Activated naive CD4-positive, alpha-beta T cell treated with anti-CD3 and anti-CD28 coated beads for 36 hours (primary cell): ENCODE measurements at regions of chr5 and their contacts with region 1.

Region 1: GRCh38 chr5:10695055-10695649 is 65.9 kb downstream of the DAP start:
- DNase-seq: peak; percentile 56
- H3K4me3 Mint-ChIP-seq: no peak overlapping the region
- H3K27ac Mint-ChIP-seq: no peak overlapping the region
- H3K4me1 Mint-ChIP-seq: peaks cover 39% of the 10 kb centered on the region
- H3K27me3 Mint-ChIP-seq: no peaks in the 10 kb centered on the region

Region 2: DNA sequence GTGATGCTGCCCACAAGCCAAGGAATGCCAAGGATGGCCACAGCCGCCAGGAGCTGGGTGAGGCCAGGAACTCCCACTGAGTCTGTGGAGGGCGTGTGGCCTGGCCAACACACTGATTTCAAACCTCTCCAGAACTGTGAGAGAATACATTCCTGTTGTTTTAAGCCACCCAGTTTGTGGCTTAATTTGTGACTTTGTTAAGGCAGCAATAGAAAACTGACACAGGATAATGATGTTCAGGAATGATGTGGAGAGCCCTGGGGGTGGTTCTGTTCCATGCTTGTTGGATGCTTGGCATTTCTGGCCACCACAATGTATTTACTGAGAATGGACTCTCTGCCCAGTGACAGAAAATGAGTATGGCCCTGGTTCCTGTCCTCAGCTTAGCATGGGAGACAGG is 16.9 kb before region 1 on chr5:
- CTCF ChIA-PET with region 1: no interaction called
- intact Hi-C with region 1: no loop called
- DNase-seq: no peak
- H3K4me3 Mint-ChIP-seq: no peak overlapping the region
- H3K27ac Mint-ChIP-seq: no peak overlapping the region
- H3K4me1 Mint-ChIP-seq: no peaks in the 10 kb centered on the region
- H3K27me3 Mint-ChIP-seq: no peaks in the 10 kb centered on the region

Region 3: DNA sequence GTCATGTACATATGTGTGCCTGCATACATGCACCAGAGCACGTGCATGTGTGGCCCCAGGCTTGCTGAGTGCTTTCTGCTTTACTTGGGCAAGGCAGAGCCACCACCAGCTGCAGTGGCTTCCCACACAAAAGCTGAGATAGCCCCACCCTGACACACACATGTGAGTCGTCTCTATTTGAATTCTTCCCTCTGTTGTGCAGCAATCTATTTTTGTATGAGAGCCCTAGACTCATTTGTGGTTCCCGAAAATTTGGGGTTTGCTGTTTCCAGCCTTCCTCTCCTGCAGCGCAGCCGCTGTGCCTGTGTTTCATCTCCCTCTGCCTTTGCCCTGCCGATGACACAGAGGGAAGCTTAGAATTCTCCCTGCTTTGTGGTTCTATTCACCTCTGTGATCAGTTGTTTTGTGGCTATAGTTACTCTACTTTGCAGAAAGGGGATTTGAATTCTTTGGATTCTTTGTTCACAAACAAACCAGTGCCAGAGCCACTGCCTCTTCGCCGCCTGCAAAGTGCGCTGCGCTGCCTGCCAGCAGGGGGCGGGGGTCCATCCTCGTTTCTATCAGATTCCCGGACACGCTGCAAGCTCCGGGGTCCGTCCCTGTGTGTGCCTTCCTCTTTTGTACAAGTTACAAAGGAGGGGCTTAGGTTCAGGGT is 161.7 kb after region 1 on chr5:
- CTCF ChIA-PET with region 1: no interaction called
- intact Hi-C with region 1: loop called (anchors 5 kb)
- DNase-seq: peak; percentile 21
- H3K4me3 Mint-ChIP-seq: no peak overlapping the region
- H3K27ac Mint-ChIP-seq: no peak overlapping the region
- H3K4me1 Mint-ChIP-seq: peaks cover 2% of the 10 kb centered on the region
- H3K27me3 Mint-ChIP-seq: peaks cover 13% of the 10 kb centered on the region

Region 4: DNA sequence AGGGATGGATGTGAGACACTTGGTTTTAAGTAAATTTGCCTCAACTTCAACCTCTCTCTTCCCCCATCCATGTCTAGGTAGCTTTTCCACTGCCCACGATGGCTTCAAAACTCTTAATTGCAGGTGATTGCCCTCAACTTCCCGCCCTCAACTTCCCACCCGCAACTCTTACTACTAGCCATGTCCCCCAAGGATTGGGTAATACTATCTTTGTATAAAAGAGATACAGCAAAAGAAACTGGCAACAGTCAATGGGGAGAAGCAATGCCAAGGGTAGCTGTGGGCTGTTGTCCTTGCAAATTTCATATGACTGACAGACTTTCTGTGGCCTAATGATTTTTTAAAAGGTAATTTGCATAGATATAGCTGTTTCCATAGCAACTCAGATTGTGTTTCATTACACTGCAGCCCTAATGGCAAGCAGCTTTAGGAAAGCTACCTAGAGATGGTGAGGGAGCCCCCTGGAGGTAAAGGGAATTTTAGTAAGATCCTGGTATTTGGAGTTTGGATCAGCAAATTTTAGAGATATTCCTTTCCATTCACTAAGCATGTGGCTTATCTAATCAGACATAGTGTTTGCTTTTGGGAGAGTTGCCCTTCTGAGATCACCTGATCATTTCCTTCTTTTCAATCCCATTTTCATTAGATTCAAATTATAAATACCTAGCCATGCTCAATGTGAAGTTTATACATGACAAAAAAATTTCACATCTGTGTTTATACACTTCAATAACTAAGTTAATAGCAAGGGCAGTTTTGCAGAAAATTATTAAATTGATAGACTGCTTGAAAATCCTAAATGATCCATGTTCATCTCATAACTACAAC is 487.5 kb after region 1 on chr5:
- CTCF ChIA-PET with region 1: no interaction called
- intact Hi-C with region 1: loop called (anchors 1 kb)
- DNase-seq: no peak
- H3K4me3 Mint-ChIP-seq: no peak overlapping the region
- H3K27ac Mint-ChIP-seq: no peak overlapping the region
- H3K4me1 Mint-ChIP-seq: peaks cover 6% of the 10 kb centered on the region
- H3K27me3 Mint-ChIP-seq: peaks cover 2% of the 10 kb centered on the region

Region 5: GRCh38 chr5:11494340-11494739 is 799.2 kb after region 1 on chr5:
- CTCF ChIA-PET with region 1: no interaction called
- intact Hi-C with region 1: loop called (anchors 5 kb)
- DNase-seq: no peak
- H3K4me3 Mint-ChIP-seq: no peak overlapping the region
- H3K27ac Mint-ChIP-seq: no peak overlapping the region
- H3K4me1 Mint-ChIP-seq: no peaks in the 10 kb centered on the region
- H3K27me3 Mint-ChIP-seq: peaks cover 3% of the 10 kb centered on the region